ENCODE measurements at regions of chr15 and their contacts with region 1.

Region 1: GRCh38 chr15:77496710-77497103 is 76.0 kb downstream of the HMG20A start:
- DNase-seq: peak; percentile 91 to 93
- H3K4me3 ChIP-seq: peak overlapping the region; percentile 6 to 29
- H3K27ac ChIP-seq: peak overlapping the region; percentile 72 to 82
- H3K4me1 ChIP-seq: peaks cover 6 to 56% (median 49%) of the 10 kb centered on the region in 4 donors
- H3K27me3 ChIP-seq: no peaks in the 10 kb centered on the region
- CTCF ChIP-seq: peak; percentile 89

Region 2: GRCh38 chr15:77118882-77119321 is 377.8 kb before region 1 on chr15:
- intact Hi-C with region 1: loop called (anchors 2 kb)
- DNase-seq: peak in 1 of 2 donors; percentile 40
- H3K4me3 ChIP-seq: no peak overlapping the region
- H3K27ac ChIP-seq: no peak overlapping the region
- H3K4me1 ChIP-seq: peaks cover 0 to 6% (median 3%) of the 10 kb centered on the region in 4 donors
- H3K27me3 ChIP-seq: no peaks in the 10 kb centered on the region
- CTCF ChIP-seq: peak; percentile 74 to 84

Region 3: GRCh38 chr15:77195586-77195985 is 301.1 kb before region 1 on chr15:
- intact Hi-C with region 1: loop called (anchors 10 kb)
- DNase-seq: no peak
- H3K4me3 ChIP-seq: no peak overlapping the region
- H3K27ac ChIP-seq: no peak overlapping the region
- H3K4me1 ChIP-seq: no peaks in the 10 kb centered on the region
- H3K27me3 ChIP-seq: no peaks in the 10 kb centered on the region
- CTCF ChIP-seq: no peak

Region 4: GRCh38 chr15:77419836-77420609 is 76.7 kb before region 1 on chr15 and contains the start of gene PEAK1:
- intact Hi-C with region 1: loop called (anchors 10 kb)
- DNase-seq: peak; percentile 100
- H3K4me3 ChIP-seq: peak within 1 kb of the TSS; percentile 91 to 96
- H3K27ac ChIP-seq: peak within 1 kb of the TSS; percentile 93 to 95
- H3K4me1 ChIP-seq: peaks cover 0 to 56% (median 28%) of the 10 kb centered on the region in 4 donors
- H3K27me3 ChIP-seq: no peaks in the 10 kb centered on the region
- CTCF ChIP-seq: no peak

Region 5: DNA sequence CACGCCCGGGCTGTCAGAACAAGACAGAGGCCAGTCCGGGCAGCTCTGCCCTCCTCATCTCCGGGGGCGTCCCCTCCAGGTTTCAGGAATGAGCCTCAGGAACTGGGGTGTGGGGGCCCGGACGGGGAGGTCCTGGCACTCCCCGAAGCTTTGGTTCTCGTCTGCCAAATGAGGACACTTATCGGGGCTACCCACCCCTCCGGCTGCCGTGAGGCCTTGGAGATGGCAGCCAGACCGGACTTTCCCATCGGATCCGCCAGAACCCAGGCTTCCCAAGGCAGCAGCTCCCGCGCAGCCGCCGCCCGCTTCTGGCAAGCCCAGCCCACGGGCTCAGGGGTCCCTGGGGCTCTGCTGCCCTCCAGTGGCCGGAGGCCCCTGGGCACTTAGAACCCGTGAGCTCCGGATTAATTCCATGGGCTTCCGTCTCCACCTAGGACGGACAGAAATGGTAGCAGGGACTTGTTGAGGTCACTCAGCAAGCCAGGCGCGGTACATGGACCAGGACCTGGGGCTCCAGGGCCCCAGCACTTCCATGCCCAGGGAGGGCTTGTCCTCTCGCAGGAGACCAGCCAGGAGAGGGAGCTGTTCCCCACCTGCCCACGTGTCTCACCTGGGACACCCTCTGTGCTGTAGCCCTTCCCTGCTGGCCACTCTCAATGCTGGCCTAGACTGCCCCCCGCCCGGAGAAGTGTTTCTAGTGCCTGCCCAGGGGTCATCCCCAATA is 46.6 kb after region 1 on chr15:
- intact Hi-C with region 1: loop called (anchors 5 kb)
- DNase-seq: peak; percentile 80 to 89
- H3K4me3 ChIP-seq: peak overlapping the region; percentile 32 to 52
- H3K27ac ChIP-seq: peak overlapping the region; percentile 26 to 38
- H3K4me1 ChIP-seq: peaks cover 0 to 31% (median 12%) of the 10 kb centered on the region in 4 donors
- H3K27me3 ChIP-seq: no peaks in the 10 kb centered on the region
- CTCF ChIP-seq: peak; percentile 98